Dorsolateral prefrontal cortex (tissue), 120 donors: ENCODE measurements at regions of chr18 and their contacts with region 1.

Region 1: DNA sequence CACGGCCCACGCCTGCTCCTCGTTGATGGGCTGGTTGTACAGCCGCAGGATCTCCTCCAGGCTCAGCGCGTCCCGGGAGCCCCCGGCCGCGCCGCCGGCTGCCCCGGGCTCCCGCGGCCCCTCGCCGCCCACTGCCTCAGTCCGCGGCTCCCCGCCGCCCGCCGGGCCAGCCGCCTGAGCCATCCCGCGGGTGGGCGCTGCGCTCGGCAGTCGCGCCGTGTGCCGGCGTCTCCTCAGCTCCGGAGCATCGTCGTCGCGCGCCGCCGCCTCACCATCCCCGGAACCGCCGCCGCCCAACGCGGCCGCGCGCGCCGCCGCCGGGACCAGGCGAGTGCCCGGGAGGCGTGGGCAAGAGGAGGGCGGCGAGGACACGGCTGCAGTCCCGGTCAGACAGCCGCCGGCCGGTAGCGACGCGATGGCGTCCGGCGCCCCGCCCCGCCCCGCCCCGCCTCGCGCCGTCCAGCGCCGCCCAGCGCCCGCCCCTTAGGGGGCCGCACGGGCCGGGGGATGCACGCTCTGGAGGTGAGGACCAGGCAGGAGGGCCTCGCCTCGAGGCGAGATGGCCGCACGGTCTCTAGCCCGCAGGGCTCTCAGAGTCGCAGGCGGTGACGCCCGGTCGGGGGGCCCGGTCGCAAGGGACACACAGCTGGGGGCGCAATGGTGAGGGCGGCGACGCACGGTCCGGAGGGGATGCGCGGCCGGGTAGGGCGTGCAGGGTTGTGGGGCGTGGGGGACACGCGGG is at the start of gene SPIRE1:
- DNase-seq: peak; percentile 39 to 83 (median 65)
- H3K4me3 ChIP-seq: peak within 1 kb of the TSS; percentile 61 to 93 (median 82)
- H3K27ac ChIP-seq: peak within 1 kb of the TSS; percentile 51 to 99 (median 95)
- H3K27me3 ChIP-seq: no peaks in the 10 kb centered on the region
- CTCF ChIP-seq: peak in 34 of 56 donors; percentile 6 to 61 (median 30)
- total RNA-seq, gene SPIRE1: 76.6 to 170 (median 113) TPM

Region 2: GRCh38 chr18:12376718-12377555 is 280.9 kb before region 1 on chr18 and contains the start of gene AFG3L2:
- intact Hi-C with region 1: loop called (anchors 2 to 5 kb)
- DNase-seq: peak; percentile 98 to 100 (median 99)
- H3K4me3 ChIP-seq: peak within 1 kb of the TSS; percentile 67 to 99 (median 92)
- H3K27ac ChIP-seq: peak within 1 kb of the TSS; percentile 66 to 98 (median 94)
- H3K27me3 ChIP-seq: no peaks in the 10 kb centered on the region
- CTCF ChIP-seq: peak in 4 of 56 donors; percentile 5 to 28 (median 12)
- total RNA-seq, gene AFG3L2: 31.6 to 64.9 (median 50.8) TPM

Region 3: DNA sequence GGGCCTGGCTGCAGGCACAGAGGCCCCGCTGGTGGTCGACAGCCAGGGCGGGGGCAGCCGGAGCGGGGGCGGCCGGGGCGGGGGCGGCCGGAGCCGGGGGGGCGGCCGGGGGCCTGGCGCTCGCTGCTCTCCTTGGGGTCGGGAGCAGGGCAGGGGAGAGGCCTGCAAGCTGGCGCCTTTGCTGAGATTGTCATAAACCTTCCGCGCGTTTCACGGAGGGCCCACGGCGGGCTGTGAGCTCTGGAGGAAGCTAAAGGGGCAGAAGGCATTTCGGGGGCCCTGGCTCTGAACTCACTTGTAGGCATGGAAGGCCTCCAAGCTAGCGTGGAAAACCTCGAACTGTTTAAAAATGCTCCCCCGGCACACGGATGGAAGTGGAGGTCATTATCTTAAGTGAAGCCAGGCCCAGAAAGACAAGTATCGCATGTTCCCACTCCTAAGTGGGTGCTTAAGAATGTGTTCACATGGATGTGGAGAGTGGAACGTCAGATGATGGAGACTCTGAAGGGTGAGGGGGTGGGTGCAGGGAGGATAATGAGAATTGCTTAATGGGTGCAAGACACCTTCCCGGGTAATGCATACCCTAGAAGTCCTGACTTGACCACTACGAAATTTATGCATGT is 249.5 kb before region 1 on chr18:
- intact Hi-C with region 1: loop called (anchors 5 kb)
- DNase-seq: peak in 1 of 10 donors; percentile 15
- H3K4me3 ChIP-seq: peak overlapping the region; percentile 50 to 78 (median 67)
- H3K27ac ChIP-seq: peak overlapping the region in 56 of 59 donors; percentile 64 to 97 (median 90)
- H3K27me3 ChIP-seq: no peaks in the 10 kb centered on the region
- CTCF ChIP-seq: no peak

Region 4: GRCh38 chr18:12543697-12544096 is 114.2 kb before region 1 on chr18:
- intact Hi-C with region 1: loop called in 1 of 2 experiments (anchors 2 kb)
- DNase-seq: no peak
- H3K4me3 ChIP-seq: no peak overlapping the region
- H3K27ac ChIP-seq: no peak overlapping the region
- H3K27me3 ChIP-seq: no peaks in the 10 kb centered on the region
- CTCF ChIP-seq: no peak

Region 5: DNA sequence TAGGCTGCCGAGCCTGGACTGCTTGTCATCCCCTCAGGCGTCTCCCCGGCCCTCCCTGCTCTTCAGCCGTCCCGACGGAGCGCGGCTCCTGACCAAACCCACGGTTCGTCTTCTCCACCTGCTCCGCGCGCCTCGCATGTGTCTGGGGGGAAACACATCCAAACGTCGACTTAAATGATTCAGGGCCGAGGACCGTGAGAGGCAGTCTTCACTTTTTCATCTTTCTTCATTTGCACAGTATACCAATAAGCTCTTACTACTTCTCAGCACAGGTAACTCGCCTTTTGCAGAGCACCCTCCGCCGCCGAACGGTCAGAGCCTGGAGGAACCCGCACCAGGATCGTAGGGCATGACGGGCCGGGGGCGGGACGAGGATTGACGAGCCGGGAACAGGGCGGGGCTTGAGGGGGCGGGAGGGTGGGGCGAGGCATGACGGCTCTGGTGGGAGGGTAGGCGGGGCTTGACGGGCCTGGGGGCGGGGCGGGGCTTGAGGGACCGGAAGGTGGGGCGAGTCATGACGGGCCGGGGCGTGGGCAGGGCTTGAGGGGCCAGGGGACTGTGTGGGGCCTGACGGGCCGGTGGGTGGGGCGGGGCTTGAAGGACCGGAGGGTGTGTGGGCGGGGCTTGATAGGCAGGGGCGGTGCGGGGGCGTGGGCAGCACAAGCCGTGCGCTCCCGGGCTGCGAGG is 289.6 kb after region 1 on chr18 and contains the start of gene SEH1L:
- intact Hi-C with region 1: loop called in 1 of 2 experiments (anchors 5 kb)
- DNase-seq: peak; percentile 97 to 100 (median 98)
- H3K4me3 ChIP-seq: peak within 1 kb of the TSS; percentile 65 to 99 (median 84)
- H3K27ac ChIP-seq: peak within 1 kb of the TSS; percentile 70 to 99 (median 95)
- H3K27me3 ChIP-seq: no peaks in the 10 kb centered on the region
- CTCF ChIP-seq: peak in 1 of 56 donors; percentile 3
- total RNA-seq, gene SEH1L: 28.6 to 78.9 (median 56.1) TPM